WTC11 (cell line): ENCODE measurements at regions of chr12 and their contacts with region 1.

Region 1: GRCh38 chr12:49347384-49348237 is 923 bp downstream of the DNAJC22 start:
- DNase-seq: peak; percentile 93
- ATAC-seq: peak; percentile 79
- H3K4me3 Mint-ChIP-seq: peak overlapping the region; percentile 75
- H3K27ac Mint-ChIP-seq: no peak overlapping the region
- H3K4me1 Mint-ChIP-seq: peaks cover 24% of the 10 kb centered on the region
- H3K27me3 Mint-ChIP-seq: peaks cover 87% of the 10 kb centered on the region
- CTCF ChIP-seq: peak; percentile 97

Region 2: GRCh38 chr12:49121047-49121696 is 226.4 kb before region 1 on chr12:
- CTCF ChIA-PET with region 1: no interaction called
- POLR2A ChIA-PET with region 1: no interaction called
- DNase-seq: peak; percentile 45
- ATAC-seq: peak; percentile 93
- H3K4me3 Mint-ChIP-seq: no peak overlapping the region
- H3K27ac Mint-ChIP-seq: no peak overlapping the region
- H3K4me1 Mint-ChIP-seq: no peaks in the 10 kb centered on the region
- H3K27me3 Mint-ChIP-seq: peaks cover 9% of the 10 kb centered on the region
- CTCF ChIP-seq: no peak

Region 3: GRCh38 chr12:49288412-49288853 is 59.2 kb before region 1 on chr12:
- CTCF ChIA-PET with region 1: interaction called, 264 read pairs
- POLR2A ChIA-PET with region 1: no interaction called
- DNase-seq: peak; percentile 76
- ATAC-seq: peak; percentile 48
- H3K4me3 Mint-ChIP-seq: no peak overlapping the region
- H3K27ac Mint-ChIP-seq: no peak overlapping the region
- H3K4me1 Mint-ChIP-seq: peaks cover 17% of the 10 kb centered on the region
- H3K27me3 Mint-ChIP-seq: peaks cover 59% of the 10 kb centered on the region
- CTCF ChIP-seq: peak; percentile 80

Region 4: DNA sequence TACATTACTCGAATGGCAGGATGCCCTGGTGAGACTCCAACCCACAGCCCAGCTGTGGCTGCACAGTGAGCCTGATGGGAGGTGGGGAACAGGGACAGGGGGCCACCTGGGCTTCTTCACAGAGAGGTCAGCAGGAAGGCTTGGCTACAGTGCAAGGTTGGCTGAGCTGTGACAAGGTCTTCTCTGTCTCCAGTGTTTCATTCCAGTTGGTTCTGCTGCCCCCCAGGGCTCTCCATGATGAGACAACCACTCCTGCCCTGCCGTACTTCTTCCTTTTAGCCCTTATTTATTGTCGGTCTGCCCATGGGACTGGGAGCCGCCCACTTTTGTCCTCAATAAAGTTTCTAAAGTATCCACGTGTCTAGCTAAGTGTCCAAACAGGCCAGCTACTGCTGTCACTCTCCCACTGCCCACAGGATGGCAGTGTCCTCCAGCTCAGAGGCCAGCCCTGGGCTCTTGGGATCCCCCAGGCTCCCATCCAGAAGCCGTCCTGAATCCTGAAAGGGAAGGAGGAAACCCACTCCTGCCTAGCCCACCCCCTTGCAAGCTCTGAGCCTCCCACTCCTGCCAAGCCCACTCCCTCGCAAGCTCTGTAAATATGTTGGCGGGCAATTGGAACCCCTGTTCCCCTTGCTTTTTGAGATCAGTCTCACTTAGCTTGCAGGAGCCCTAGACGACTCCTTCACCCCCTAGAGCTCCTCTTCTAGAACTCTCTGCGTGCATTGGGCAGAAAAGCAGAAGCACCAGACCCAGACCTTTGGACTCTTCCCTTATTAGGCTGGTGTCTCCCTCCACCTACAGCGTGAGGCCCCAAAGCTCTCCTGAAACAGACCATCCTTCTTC is 16.0 kb before region 1 on chr12:
- CTCF ChIA-PET with region 1: interaction called, 234 read pairs
- POLR2A ChIA-PET with region 1: interaction called, 18 read pairs
- DNase-seq: peak; percentile 77
- ATAC-seq: peak; percentile 76
- H3K4me3 Mint-ChIP-seq: peak overlapping the region; percentile 77; the same call in 1 of the 2 replicates
- H3K27ac Mint-ChIP-seq: no peak overlapping the region
- H3K4me1 Mint-ChIP-seq: peaks cover 20% of the 10 kb centered on the region
- H3K27me3 Mint-ChIP-seq: peaks cover 52% of the 10 kb centered on the region
- CTCF ChIP-seq: peak; percentile 42; the same call in 1 of the 2 replicates

Region 5: GRCh38 chr12:49366652-49367380 is 19.2 kb after region 1 on chr12:
- CTCF ChIA-PET with region 1: interaction called, 69 read pairs
- POLR2A ChIA-PET with region 1: interaction called, 7 read pairs
- DNase-seq: peak; percentile 92
- ATAC-seq: peak; percentile 89
- H3K4me3 Mint-ChIP-seq: peak overlapping the region; percentile 89
- H3K27ac Mint-ChIP-seq: peak overlapping the region; percentile 97
- H3K4me1 Mint-ChIP-seq: peaks cover 30% of the 10 kb centered on the region
- H3K27me3 Mint-ChIP-seq: peaks cover 12% of the 10 kb centered on the region
- CTCF ChIP-seq: no peak

Region 6: GRCh38 chr12:49482095-49483051 is 134.8 kb after region 1 on chr12:
- CTCF ChIA-PET with region 1: interaction called, 15 read pairs
- POLR2A ChIA-PET with region 1: no interaction called
- DNase-seq: no peak
- ATAC-seq: peak; percentile 58; the same call in 1 of the 2 replicates
- H3K4me3 Mint-ChIP-seq: no peak overlapping the region
- H3K27ac Mint-ChIP-seq: peak overlapping the region; percentile 81
- H3K4me1 Mint-ChIP-seq: peaks cover 56% of the 10 kb centered on the region
- H3K27me3 Mint-ChIP-seq: no peaks in the 10 kb centered on the region
- CTCF ChIP-seq: no peak

Region 7: GRCh38 chr12:49538510-49539403 is 191.1 kb after region 1 on chr12 and contains the start of gene KCNH3:
- CTCF ChIA-PET with region 1: interaction called, 34 read pairs
- POLR2A ChIA-PET with region 1: no interaction called
- DNase-seq: peak; percentile 75
- ATAC-seq: peak; percentile 25
- H3K4me3 Mint-ChIP-seq: peak within 1 kb of the TSS; percentile 71
- H3K27ac Mint-ChIP-seq: no peak within 1 kb of the TSS
- H3K4me1 Mint-ChIP-seq: peaks cover 31% of the 10 kb centered on the region
- H3K27me3 Mint-ChIP-seq: peaks cover 92% of the 10 kb centered on the region
- CTCF ChIP-seq: no peak
- total RNA-seq, gene KCNH3: 0.27 to 0.44 TPM (median 0.44 TPM) in 3 replicates

Region 8: GRCh38 chr12:49580572-49581535 is 233.2 kb after region 1 on chr12:
- CTCF ChIA-PET with region 1: interaction called, 15 read pairs
- POLR2A ChIA-PET with region 1: no interaction called
- DNase-seq: peak; percentile 94
- ATAC-seq: peak; percentile 96
- H3K4me3 Mint-ChIP-seq: no peak overlapping the region
- H3K27ac Mint-ChIP-seq: no peak overlapping the region
- H3K4me1 Mint-ChIP-seq: peaks cover 8% of the 10 kb centered on the region
- H3K27me3 Mint-ChIP-seq: no peaks in the 10 kb centered on the region
- CTCF ChIP-seq: peak; percentile 66